Endothelial cell of umbilical vein (primary cell): ENCODE measurements at regions of chr4 and their contacts with region 1.

Region 1: GRCh38 chr4:121070696-121071639 is 1.4 kb downstream of the NDNF start:
- DNase-seq: peak; percentile 13
- H3K4me3 ChIP-seq: peak overlapping the region in 2 of 3 experiments; percentile 14 to 67
- H3K27ac ChIP-seq: no peak overlapping the region
- H3K4me1 ChIP-seq: peaks cover 8% of the 10 kb centered on the region
- H3K27me3 ChIP-seq: peaks cover 37 to 40% of the 10 kb centered on the region in 2 experiments
- CTCF ChIP-seq: peak; percentile 31 to 49
- POLR2A ChIP-seq: no peak

Region 2: GRCh38 chr4:120524237-120524636 is 546.7 kb before region 1 on chr4:
- CTCF ChIA-PET with region 1: no interaction called
- POLR2A ChIA-PET with region 1: no interaction called
- dilution Hi-C with region 1: no loop called
- intact Hi-C with region 1: no loop called
- DNase-seq: no peak
- H3K4me3 ChIP-seq: no peak overlapping the region
- H3K27ac ChIP-seq: no peak overlapping the region
- H3K4me1 ChIP-seq: no peaks in the 10 kb centered on the region
- H3K27me3 ChIP-seq: no peaks in the 10 kb centered on the region
- CTCF ChIP-seq: no peak
- POLR2A ChIP-seq: no peak

Region 3: GRCh38 chr4:120692964-120693363 is 378.0 kb before region 1 on chr4:
- CTCF ChIA-PET with region 1: no interaction called
- POLR2A ChIA-PET with region 1: no interaction called
- dilution Hi-C with region 1: no loop called
- intact Hi-C with region 1: no loop called
- DNase-seq: peak; percentile 90
- H3K4me3 ChIP-seq: no peak overlapping the region
- H3K27ac ChIP-seq: peak overlapping the region; percentile 29
- H3K4me1 ChIP-seq: peaks cover 6% of the 10 kb centered on the region
- H3K27me3 ChIP-seq: no peaks in the 10 kb centered on the region
- CTCF ChIP-seq: no peak
- POLR2A ChIP-seq: no peak

Region 4: GRCh38 chr4:120922381-120923206 is 148.4 kb before region 1 on chr4 and contains the start of gene PRDM5:
- CTCF ChIA-PET with region 1: no interaction called
- POLR2A ChIA-PET with region 1: no interaction called
- dilution Hi-C with region 1: no loop called
- intact Hi-C with region 1: loop called (anchors 2 kb)
- DNase-seq: peak; percentile 52
- H3K4me3 ChIP-seq: peak within 1 kb of the TSS; percentile 10 to 79 (median 68)
- H3K27ac ChIP-seq: peak within 1 kb of the TSS; percentile 49
- H3K4me1 ChIP-seq: peaks cover 5% of the 10 kb centered on the region
- H3K27me3 ChIP-seq: no peaks in the 10 kb centered on the region
- CTCF ChIP-seq: peak in 1 of 2 donors; percentile 34
- POLR2A ChIP-seq: peak; percentile 27
- total RNA-seq, gene PRDM5: 5.7 and 8.1 TPM in 2 replicates

Region 5: GRCh38 chr4:121030131-121030530 is 40.8 kb before region 1 on chr4:
- CTCF ChIA-PET with region 1: no interaction called
- POLR2A ChIA-PET with region 1: no interaction called
- dilution Hi-C with region 1: no loop called
- intact Hi-C with region 1: no loop called
- DNase-seq: no peak
- H3K4me3 ChIP-seq: no peak overlapping the region
- H3K27ac ChIP-seq: no peak overlapping the region
- H3K4me1 ChIP-seq: no peaks in the 10 kb centered on the region
- H3K27me3 ChIP-seq: no peaks in the 10 kb centered on the region
- CTCF ChIP-seq: no peak
- POLR2A ChIP-seq: no peak